Naive thymus-derived CD4-positive, alpha-beta T cell (primary cell): ENCODE measurements at regions of chr5 and their contacts with region 1.

Region 1: DNA sequence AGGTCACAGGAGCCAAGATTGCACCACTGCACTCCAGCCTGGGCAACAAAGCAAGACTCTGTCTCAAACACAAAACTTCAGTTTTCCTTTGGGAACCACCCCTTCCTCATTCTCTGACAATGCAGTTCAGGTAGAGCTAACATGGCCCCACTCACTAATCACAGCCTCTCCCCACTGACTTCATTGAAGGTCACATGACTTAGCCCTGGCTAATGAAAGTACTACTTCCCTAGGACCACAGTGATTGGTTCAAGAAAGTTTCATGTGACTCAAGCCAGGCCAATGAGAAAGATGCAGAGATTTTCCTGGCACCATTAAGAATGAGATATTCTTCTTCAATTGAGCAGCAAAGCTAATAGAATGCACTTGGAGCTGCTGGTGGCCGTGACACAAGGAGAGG is 67.2 kb upstream of the GPBP1 start:
- DNase-seq: no peak
- ATAC-seq: no peak
- H3K4me3 ChIP-seq: no peak overlapping the region
- H3K4me3 Mint-ChIP-seq: no peak overlapping the region
- H3K27ac ChIP-seq: no peak overlapping the region
- H3K27ac Mint-ChIP-seq: no peak overlapping the region
- H3K4me1 ChIP-seq: no peaks in the 10 kb centered on the region
- H3K4me1 Mint-ChIP-seq: peaks cover 0 to 2% (median 0%) of the 10 kb centered on the region in 7 donors
- H3K27me3 ChIP-seq: no peaks in the 10 kb centered on the region
- H3K27me3 Mint-ChIP-seq: peaks cover 0 to 29% (median 0%) of the 10 kb centered on the region in 5 donors

Region 2: GRCh38 chr5:57063773-57064172 is 42.9 kb before region 1 on chr5:
- CTCF ChIA-PET with region 1: no interaction called
- POLR2A ChIA-PET with region 1: no interaction called
- intact Hi-C with region 1: loop called in 1 of 2 experiments (anchors 2 kb)
- DNase-seq: no peak
- ATAC-seq: no peak
- H3K4me3 ChIP-seq: no peak overlapping the region
- H3K4me3 Mint-ChIP-seq: no peak overlapping the region
- H3K27ac ChIP-seq: no peak overlapping the region
- H3K27ac Mint-ChIP-seq: no peak overlapping the region
- H3K4me1 ChIP-seq: no peaks in the 10 kb centered on the region
- H3K4me1 Mint-ChIP-seq: no peaks in the 10 kb centered on the region
- H3K27me3 ChIP-seq: peaks cover 0 to 2% of the 10 kb centered on the region in 2 donors
- H3K27me3 Mint-ChIP-seq: peaks cover 0 to 21% (median 15%) of the 10 kb centered on the region in 5 donors

Region 3: GRCh38 chr5:57082441-57083067 is 24.1 kb before region 1 on chr5:
- CTCF ChIA-PET with region 1: no interaction called
- POLR2A ChIA-PET with region 1: no interaction called
- intact Hi-C with region 1: no loop called
- DNase-seq: no peak
- ATAC-seq: no peak
- H3K4me3 ChIP-seq: no peak overlapping the region
- H3K4me3 Mint-ChIP-seq: no peak overlapping the region
- H3K27ac ChIP-seq: no peak overlapping the region
- H3K27ac Mint-ChIP-seq: no peak overlapping the region
- H3K4me1 ChIP-seq: no peaks in the 10 kb centered on the region
- H3K4me1 Mint-ChIP-seq: no peaks in the 10 kb centered on the region
- H3K27me3 ChIP-seq: no peaks in the 10 kb centered on the region
- H3K27me3 Mint-ChIP-seq: peaks cover 0 to 21% (median 10%) of the 10 kb centered on the region in 5 donors